BJ (cell line): ENCODE measurements at regions of chr1 and their contacts with region 1.

Region 1: DNA sequence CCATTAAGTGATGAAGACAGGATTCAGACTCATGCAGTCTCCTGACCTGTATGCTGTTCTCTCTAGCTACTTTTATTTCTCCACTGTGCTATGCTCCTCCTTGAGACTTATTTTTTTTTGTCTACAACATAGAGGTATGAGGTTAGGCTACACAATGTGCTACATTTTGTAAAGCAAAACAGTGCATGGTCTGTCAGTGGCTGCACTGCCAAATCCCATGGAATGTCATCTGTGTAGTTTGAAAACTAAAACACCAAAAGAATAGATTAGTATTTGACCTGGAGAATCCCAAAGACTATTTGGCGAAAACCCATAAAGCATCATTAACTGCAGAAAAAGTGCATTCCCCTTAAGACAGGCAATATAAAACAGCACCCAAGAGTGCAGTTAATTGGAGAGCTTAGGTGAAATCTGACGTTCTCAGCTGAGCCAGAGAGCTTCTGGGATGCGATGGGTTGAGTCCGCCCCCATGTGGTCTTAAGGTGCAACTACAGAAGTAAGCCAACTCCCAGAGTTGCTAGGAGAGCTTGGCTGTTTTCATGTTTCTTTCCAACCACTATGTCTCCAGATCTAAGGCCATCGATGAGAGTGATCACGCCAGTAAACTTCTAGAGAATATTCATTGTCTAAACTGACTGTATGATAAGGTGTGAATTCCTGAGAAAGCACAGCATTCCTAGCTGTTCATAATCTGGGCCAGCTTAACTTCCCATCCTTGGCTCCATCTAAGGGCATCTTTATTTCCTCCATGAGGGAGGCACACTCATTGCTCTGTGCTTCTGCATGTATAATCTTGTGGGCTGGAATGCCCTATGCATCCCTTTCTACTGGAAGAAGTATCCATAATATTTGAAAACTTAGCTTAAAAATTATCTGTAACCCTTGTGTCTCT is 20.7 kb upstream of the CYP2J2 start:
- DNase-seq: no peak
- H3K4me3 ChIP-seq: no peak overlapping the region
- H3K27me3 ChIP-seq: no peaks in the 10 kb centered on the region; the same call in 1 of the 2 replicates
- CTCF ChIP-seq: peak; percentile 92

Region 2: GRCh38 chr1:59879574-59879973 is 67.7 kb before region 1 on chr1:
- CTCF ChIA-PET with region 1: interaction called, 36 read pairs
- POLR2A ChIA-PET with region 1: no interaction called
- DNase-seq: no peak
- H3K4me3 ChIP-seq: no peak overlapping the region
- H3K27me3 ChIP-seq: no peaks in the 10 kb centered on the region
- CTCF ChIP-seq: peak; percentile 50

Region 3: GRCh38 chr1:59917026-59917784 is 30.1 kb before region 1 on chr1:
- CTCF ChIA-PET with region 1: no interaction called
- POLR2A ChIA-PET with region 1: no interaction called
- DNase-seq: no peak
- H3K4me3 ChIP-seq: no peak overlapping the region
- H3K27me3 ChIP-seq: no peaks in the 10 kb centered on the region
- CTCF ChIP-seq: no peak

Region 4: DNA sequence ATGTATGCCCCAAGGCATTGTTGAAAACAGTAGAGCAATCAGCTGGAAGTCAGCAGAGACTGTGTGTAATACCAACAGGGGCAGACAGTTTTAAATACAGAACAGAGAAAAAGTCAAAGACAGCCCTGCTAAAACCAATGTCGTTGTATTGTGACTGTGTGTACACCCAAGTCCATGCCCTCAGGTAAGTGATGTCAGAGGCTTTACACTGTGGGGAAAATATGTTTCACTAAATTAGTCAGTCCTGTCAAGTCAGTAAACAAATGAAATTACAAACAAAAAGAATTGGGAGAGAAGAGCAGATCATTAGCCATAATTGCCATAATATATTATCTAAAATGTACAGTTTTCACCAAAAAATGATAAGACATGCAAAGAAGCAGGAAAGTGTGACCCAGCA is 18.3 kb before region 1 on chr1:
- CTCF ChIA-PET with region 1: interaction called, 32 read pairs
- POLR2A ChIA-PET with region 1: interaction called, 7 read pairs
- DNase-seq: no peak
- H3K4me3 ChIP-seq: no peak overlapping the region
- H3K27me3 ChIP-seq: peaks cover 2% of the 10 kb centered on the region
- CTCF ChIP-seq: no peak

Region 5: DNA sequence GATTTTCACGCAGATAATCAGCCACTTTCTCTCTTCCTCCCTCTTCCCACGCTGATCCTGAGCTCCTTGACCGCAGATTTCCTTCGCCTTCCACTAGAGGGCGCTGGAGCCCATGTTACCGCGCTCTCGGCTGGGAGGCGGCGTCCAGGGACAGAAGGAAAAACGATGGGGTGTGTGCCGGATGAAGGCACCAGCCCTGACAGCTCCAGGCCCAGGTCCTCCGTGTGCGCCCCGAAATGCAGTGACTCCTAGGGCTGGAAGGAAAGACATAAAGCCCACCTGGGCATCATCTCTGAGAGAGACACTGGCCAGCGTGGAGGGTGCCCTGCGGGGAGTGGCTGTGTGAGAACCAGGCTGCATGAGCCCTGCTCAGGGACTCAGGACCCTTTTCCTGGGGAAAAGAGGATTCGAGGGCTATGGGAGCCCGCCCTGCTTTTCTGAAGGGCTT is 24.2 kb after region 1 on chr1:
- CTCF ChIA-PET with region 1: interaction called, 10 read pairs
- POLR2A ChIA-PET with region 1: no interaction called
- DNase-seq: no peak
- H3K4me3 ChIP-seq: no peak overlapping the region
- H3K27me3 ChIP-seq: peaks cover 9% of the 10 kb centered on the region
- CTCF ChIP-seq: peak; percentile 93